Activated CD8-positive, alpha-beta memory T cell treated with anti-CD3 and anti-CD28 coated beads, Interleukin-2, amount 10 ng/mL, durations not matched to agents 7 days and 5 days (primary cell): ENCODE measurements at regions of chr5 and their contacts with region 1.

Region 1: GRCh38 chr5:1644810-1645571 is 121.2 kb upstream of the LPCAT1 start:
- DNase-seq: peak; percentile 81
- ATAC-seq: peak; percentile 90
- H3K4me3 Mint-ChIP-seq: no peak overlapping the region
- H3K27ac Mint-ChIP-seq: no peak overlapping the region
- H3K4me1 Mint-ChIP-seq: peaks cover 6% of the 10 kb centered on the region
- H3K27me3 Mint-ChIP-seq: peaks cover 49% of the 10 kb centered on the region

Region 2: DNA sequence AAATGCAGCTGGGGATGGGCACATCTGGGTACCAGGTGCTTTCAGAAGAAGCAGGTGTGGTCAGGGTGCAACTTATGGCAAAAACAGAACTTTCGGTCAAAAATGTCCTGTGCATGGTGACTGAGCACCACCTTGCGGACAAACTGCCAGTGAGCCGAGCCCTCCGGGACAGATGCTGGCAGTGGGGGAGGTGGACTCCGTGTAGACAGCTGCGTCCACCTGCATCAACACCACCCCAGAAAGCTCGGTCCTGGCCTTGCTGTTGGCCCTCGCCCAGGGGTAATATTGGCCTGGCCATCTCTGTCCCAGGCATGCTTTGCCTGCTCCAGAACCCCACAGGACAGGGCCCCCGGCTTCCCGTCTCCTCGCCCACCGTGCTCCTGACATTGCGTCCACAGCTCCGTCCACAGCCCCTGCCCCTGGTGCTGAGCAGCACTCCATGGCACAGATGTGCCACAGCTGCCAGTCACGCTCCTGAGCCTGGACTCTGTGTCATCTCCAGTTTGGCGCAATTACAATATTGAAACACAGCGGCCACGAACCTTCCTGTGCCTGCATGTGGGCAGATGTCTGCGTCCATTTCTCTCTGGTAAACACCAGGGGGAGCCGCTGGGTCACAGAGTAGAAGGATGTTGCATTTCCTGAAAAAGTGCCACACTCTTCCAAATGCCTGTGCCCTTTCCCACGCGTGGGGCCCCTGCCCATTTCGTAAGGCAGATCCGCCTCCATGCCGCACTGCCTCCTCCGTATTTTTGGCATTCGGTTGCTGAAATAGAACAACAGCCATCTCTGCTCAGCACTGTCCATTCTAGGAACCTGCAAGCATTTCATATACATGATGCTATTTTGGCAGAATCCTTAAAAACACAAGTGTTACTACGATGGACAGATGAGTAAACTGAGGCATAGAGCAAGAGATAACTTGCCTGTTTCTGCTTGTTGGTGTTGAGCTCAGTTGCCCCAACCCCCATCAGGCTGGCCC is 477.0 kb before region 1 on chr5:
- CTCF ChIA-PET with region 1: interaction called, 24 read pairs
- DNase-seq: peak; percentile 77
- ATAC-seq: peak; percentile 79
- H3K4me3 Mint-ChIP-seq: peak overlapping the region; percentile 23
- H3K27ac Mint-ChIP-seq: no peak overlapping the region
- H3K4me1 Mint-ChIP-seq: peaks cover 11% of the 10 kb centered on the region
- H3K27me3 Mint-ChIP-seq: peaks cover 2% of the 10 kb centered on the region

Region 3: GRCh38 chr5:1174122-1174936 is 470.7 kb before region 1 on chr5:
- CTCF ChIA-PET with region 1: interaction called, 13 read pairs
- DNase-seq: peak; percentile 49
- ATAC-seq: peak; percentile 28
- H3K4me3 Mint-ChIP-seq: no peak overlapping the region
- H3K27ac Mint-ChIP-seq: no peak overlapping the region
- H3K4me1 Mint-ChIP-seq: peaks cover 12% of the 10 kb centered on the region
- H3K27me3 Mint-ChIP-seq: no peaks in the 10 kb centered on the region

Region 4: GRCh38 chr5:1344975-1345838 is 299.8 kb before region 1 on chr5 and contains the start of gene CLPTM1L:
- CTCF ChIA-PET with region 1: interaction called, 13 read pairs
- DNase-seq: peak; percentile 90
- ATAC-seq: peak; percentile 96
- H3K4me3 Mint-ChIP-seq: peak within 1 kb of the TSS; percentile 83
- H3K27ac Mint-ChIP-seq: peak within 1 kb of the TSS; percentile 80
- H3K4me1 Mint-ChIP-seq: peaks cover 33% of the 10 kb centered on the region
- H3K27me3 Mint-ChIP-seq: peaks cover 2% of the 10 kb centered on the region
- total RNA-seq, gene CLPTM1L: 107 to 115 TPM

Region 5: GRCh38 chr5:1380011-1380817 is 264.8 kb before region 1 on chr5:
- CTCF ChIA-PET with region 1: interaction called, 27 read pairs
- DNase-seq: peak; percentile 69
- ATAC-seq: peak; percentile 95
- H3K4me3 Mint-ChIP-seq: peak overlapping the region; percentile 31
- H3K27ac Mint-ChIP-seq: peak overlapping the region; percentile 65
- H3K4me1 Mint-ChIP-seq: peaks cover 15% of the 10 kb centered on the region
- H3K27me3 Mint-ChIP-seq: no peaks in the 10 kb centered on the region

Region 6: GRCh38 chr5:1633605-1634336 is 11.2 kb before region 1 on chr5:
- CTCF ChIA-PET with region 1: interaction called, 11 read pairs
- DNase-seq: peak; percentile 91
- ATAC-seq: peak; percentile 96
- H3K4me3 Mint-ChIP-seq: peak overlapping the region; percentile 87
- H3K27ac Mint-ChIP-seq: peak overlapping the region; percentile 87
- H3K4me1 Mint-ChIP-seq: peaks cover 26% of the 10 kb centered on the region
- H3K27me3 Mint-ChIP-seq: no peaks in the 10 kb centered on the region